ENCODE measurements at regions of chr10 and their contacts with region 1.

Region 1: GRCh38 chr10:103254538-103255325 is 9.0 kb downstream of the RPEL1 start:
- DNase-seq: no peak
- ATAC-seq: no peak
- H3K4me3 ChIP-seq: no peak overlapping the region
- H3K27ac ChIP-seq: no peak overlapping the region
- H3K4me1 ChIP-seq: no peaks in the 10 kb centered on the region
- H3K27me3 ChIP-seq: no peaks in the 10 kb centered on the region
- CTCF ChIP-seq: no peak

Region 2: DNA sequence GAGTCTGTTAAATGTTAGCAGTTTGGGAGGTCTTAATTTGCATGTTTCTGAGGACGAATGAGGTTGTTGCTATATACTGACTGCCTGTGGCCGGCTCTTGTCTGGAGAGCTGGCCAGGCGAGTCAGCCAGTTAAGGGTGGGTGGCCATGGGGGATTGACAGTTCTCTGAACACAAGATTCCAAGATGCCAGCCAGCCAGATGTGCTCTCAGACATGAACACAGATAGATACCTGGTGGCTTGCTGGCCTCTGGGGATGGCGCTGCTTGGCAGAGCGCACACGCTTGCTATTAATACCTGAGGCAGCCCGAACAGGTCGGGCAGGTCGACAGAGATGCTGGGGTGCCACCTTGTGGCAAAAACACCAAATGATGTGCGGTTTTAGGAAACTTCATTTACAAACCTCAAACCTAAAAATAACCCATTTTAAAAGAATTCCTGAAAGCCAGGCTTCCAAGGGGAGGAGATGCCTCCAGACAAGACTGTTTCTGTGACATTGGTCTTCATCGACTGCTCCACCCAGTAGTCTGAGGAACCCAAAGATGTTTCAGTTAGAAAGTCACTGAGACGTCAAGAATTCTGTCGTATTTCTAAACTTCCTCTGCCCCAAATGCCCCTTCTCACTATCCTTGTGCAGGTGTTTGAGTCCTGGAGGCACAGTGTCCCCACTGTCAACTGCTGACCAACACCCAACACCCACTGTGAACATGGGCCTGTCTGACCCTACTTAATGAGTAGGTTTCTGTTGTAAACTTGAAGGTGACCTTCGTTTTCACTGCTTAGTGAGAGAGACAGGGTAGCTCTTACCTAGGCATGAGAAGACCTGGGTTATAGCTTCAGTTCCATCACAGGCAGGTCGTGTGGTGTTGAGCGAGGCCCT is 185.0 kb before region 1 on chr10:
- intact Hi-C with region 1: loop called (anchors 10 kb)
- DNase-seq: peak; percentile 75
- ATAC-seq: peak; percentile 88
- H3K4me3 ChIP-seq: no peak overlapping the region
- H3K27ac ChIP-seq: no peak overlapping the region
- H3K4me1 ChIP-seq: no peaks in the 10 kb centered on the region
- H3K27me3 ChIP-seq: no peaks in the 10 kb centered on the region
- CTCF ChIP-seq: peak; percentile 67

Region 3: GRCh38 chr10:103554488-103555324 is 300.0 kb after region 1 on chr10:
- intact Hi-C with region 1: no loop called
- DNase-seq: no peak
- ATAC-seq: peak; percentile 49
- H3K4me3 ChIP-seq: peak overlapping the region; percentile 39
- H3K27ac ChIP-seq: no peak overlapping the region
- H3K4me1 ChIP-seq: peaks cover 7% of the 10 kb centered on the region
- H3K27me3 ChIP-seq: peaks cover 13% of the 10 kb centered on the region
- CTCF ChIP-seq: no peak

Region 4: GRCh38 chr10:103727546-103727963 is 472.8 kb after region 1 on chr10:
- intact Hi-C with region 1: no loop called
- DNase-seq: no peak
- ATAC-seq: no peak
- H3K4me3 ChIP-seq: no peak overlapping the region
- H3K27ac ChIP-seq: no peak overlapping the region
- H3K4me1 ChIP-seq: no peaks in the 10 kb centered on the region
- H3K27me3 ChIP-seq: no peaks in the 10 kb centered on the region
- CTCF ChIP-seq: no peak

Region 5: DNA sequence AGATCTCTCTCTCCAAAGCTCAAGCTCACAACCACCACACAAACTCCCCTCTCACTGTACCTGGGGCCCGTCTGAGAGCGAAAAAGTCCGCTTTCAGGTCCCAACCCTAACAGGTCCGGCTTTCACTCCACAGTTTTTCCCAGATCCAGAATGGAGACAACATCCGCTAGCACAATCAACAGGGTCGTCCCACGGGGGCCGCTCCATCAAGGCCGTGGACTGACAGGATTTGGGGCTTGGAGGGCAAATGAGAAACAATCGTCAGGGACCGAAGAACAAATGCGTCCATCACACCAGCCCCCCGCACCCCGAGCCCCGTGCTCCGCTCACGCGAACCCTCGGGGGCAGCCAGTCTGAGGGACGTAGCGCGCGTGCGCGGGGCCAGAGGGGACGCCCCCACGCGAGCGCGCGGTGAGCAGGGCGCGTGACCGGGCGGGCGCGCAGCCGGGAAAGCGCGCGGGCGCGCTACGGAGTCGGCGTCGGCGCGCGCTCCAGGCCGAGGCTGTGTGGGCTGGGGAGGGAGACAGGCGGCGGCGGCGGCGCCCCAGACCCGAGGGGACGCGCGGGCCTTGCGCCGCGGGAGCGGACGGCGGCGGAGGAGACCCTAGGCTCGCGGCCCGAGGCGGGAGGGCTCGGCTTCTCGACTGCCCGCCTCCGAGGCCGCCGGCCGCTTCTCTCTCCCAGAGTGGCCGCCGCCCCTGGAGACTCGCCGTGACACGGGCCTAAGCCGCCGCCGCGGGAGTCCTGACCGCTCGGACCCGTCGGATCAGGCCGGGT is 712.1 kb after region 1 on chr10 and contains the start of gene SLK:
- intact Hi-C with region 1: no loop called
- DNase-seq: peak; percentile 93
- ATAC-seq: peak; percentile 99
- H3K4me3 ChIP-seq: peak within 1 kb of the TSS; percentile 61
- H3K27ac ChIP-seq: peak within 1 kb of the TSS; percentile 95
- H3K4me1 ChIP-seq: peaks cover 27% of the 10 kb centered on the region
- H3K27me3 ChIP-seq: no peaks in the 10 kb centered on the region
- CTCF ChIP-seq: no peak
- total RNA-seq, gene SLK: 46.7 TPM